ENCODE measurements at regions of chr17 and their contacts with region 1.

Region 1: DNA sequence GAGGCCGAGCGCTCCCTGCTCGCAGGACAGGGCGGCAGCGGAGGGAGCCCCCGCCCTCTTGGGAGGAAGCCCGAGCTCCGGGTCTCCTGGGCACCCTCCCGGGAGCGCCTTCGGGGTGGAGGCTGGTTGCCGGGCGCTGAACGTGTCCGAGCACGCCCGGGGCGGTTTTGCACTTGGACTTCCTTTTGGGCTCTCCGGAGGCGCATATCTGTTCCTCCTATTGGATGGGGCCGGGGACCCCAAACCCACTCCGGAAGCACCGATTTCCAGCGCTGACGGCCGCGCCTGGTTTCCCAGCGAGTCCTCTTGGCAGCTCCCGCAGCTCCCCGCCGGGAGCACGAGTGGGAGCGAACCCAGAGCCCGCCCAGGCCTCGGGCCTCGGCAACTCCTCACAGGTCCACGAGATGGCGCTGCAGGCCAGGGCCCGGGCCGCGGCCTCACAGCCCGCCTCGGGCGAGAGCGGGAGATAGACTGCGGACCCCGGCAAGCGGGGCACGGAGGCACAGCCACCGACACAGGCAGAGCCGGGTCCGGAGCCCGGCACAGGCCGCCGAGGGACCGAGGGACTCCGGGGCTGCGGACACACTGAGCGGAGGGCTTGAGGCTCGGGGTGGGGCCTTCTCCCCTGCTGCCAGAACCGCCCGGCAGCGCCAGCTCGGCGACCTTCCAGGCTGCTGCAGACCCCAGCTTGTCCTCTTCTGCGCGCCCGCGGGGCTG is 12.7 kb downstream of the TBX2 start:
- DNase-seq: peak; percentile 81
- H3K4me3 ChIP-seq: peak overlapping the region; percentile 53 to 75 (median 71)
- H3K27ac ChIP-seq: peak overlapping the region; percentile 2
- H3K4me1 ChIP-seq: peaks cover 17% of the 10 kb centered on the region
- H3K27me3 ChIP-seq: no peaks in the 10 kb centered on the region
- CTCF ChIP-seq: peak; percentile 68 to 98

Region 2: DNA sequence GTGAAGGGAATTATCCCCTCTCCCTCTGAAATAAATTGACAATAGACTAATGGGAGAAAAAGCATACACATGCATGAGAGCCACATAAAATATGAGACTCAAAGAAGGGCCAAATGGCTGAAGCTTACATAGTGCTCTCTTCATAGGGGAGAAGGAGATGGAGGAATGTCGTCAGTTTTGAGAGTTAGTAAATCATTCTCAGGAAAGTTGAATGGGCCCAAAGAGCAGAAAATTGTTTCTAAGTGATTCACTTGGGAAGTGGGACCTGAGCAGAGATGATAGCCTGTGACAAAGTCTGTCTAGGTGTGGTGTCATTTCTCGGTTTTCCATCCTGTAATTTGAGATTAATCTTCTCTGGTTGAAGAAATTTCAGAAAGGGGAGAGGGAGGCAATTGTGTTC is 699.6 kb before region 1 on chr17:
- CTCF ChIA-PET with region 1: no interaction called
- dilution Hi-C with region 1: no loop called
- in situ Hi-C with region 1: loop called (anchors 10 to 25 kb)
- intact Hi-C with region 1: no loop called
- DNase-seq: no peak
- H3K4me3 ChIP-seq: no peak overlapping the region
- H3K27ac ChIP-seq: no peak overlapping the region
- H3K4me1 ChIP-seq: no peaks in the 10 kb centered on the region
- H3K27me3 ChIP-seq: no peaks in the 10 kb centered on the region
- CTCF ChIP-seq: no peak

Region 3: DNA sequence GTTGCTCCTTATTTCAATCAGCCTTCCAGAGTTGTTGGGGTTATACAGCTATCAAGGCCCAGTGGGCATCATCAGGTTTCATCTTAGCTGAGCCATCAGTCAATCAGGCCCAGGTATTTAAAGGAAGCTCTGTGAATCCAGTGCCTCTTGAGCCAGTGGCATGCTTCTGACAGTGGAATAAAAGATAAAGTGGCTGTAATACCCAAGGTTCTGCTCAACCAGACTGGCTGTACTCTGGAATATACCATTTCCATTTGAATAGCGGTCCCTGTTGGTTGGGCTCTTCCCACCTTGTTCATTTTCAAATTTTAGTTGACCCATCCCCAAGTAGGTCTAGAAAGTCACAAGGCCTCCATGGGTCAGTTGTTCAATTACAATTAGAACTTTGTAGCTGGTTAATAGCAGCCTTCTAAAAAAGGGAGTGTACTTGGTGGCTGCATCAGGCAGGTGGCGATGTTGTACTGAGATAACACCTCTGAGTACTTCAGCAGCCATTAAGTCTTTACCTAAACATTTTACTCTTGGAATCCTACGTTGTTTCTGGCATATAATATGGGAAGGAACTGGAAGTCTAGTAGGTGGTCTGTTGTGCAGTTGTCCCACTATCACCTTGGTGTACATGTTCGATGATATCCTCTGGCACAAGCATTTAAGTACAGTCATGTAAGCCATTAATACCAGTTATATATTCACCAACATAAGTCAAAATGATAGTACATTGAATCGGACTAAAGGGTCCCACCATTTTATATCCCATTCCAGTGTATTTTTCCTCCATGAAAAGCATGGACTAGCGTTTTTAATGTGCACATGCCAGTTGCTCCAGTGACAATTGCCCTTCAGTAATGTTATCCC is 440.6 kb before region 1 on chr17:
- CTCF ChIA-PET with region 1: interaction called, 5 read pairs
- dilution Hi-C with region 1: no loop called
- in situ Hi-C with region 1: no loop called
- intact Hi-C with region 1: loop called (anchors 1 kb)
- DNase-seq: peak; percentile 28
- H3K4me3 ChIP-seq: no peak overlapping the region
- H3K27ac ChIP-seq: no peak overlapping the region
- H3K4me1 ChIP-seq: no peaks in the 10 kb centered on the region
- H3K27me3 ChIP-seq: no peaks in the 10 kb centered on the region
- CTCF ChIP-seq: peak; percentile 57 to 69

Region 4: DNA sequence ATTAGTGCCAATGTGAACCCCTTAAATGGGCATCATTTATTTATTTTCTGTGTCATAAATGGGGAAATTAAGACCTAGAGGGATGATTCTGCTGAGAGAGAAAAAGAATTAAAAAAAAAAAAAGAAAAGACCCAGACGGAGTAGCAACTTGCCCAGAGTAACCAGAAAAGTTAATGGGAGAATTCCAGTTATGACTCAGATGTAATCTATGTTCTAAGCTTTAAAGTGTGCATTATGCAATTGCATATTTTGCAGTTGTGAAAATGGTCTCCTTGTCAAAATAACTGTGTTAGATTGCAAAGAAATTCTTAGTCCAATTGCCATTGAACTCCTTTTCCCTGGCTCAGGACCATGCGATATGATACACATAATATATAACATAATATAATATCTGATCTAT is 51.2 kb before region 1 on chr17:
- CTCF ChIA-PET with region 1: interaction called, 10 read pairs
- dilution Hi-C with region 1: no loop called
- in situ Hi-C with region 1: no loop called
- intact Hi-C with region 1: no loop called
- DNase-seq: peak; percentile 57
- H3K4me3 ChIP-seq: no peak overlapping the region
- H3K27ac ChIP-seq: no peak overlapping the region
- H3K4me1 ChIP-seq: peaks cover 23% of the 10 kb centered on the region
- H3K27me3 ChIP-seq: no peaks in the 10 kb centered on the region
- CTCF ChIP-seq: no peak

Region 5: DNA sequence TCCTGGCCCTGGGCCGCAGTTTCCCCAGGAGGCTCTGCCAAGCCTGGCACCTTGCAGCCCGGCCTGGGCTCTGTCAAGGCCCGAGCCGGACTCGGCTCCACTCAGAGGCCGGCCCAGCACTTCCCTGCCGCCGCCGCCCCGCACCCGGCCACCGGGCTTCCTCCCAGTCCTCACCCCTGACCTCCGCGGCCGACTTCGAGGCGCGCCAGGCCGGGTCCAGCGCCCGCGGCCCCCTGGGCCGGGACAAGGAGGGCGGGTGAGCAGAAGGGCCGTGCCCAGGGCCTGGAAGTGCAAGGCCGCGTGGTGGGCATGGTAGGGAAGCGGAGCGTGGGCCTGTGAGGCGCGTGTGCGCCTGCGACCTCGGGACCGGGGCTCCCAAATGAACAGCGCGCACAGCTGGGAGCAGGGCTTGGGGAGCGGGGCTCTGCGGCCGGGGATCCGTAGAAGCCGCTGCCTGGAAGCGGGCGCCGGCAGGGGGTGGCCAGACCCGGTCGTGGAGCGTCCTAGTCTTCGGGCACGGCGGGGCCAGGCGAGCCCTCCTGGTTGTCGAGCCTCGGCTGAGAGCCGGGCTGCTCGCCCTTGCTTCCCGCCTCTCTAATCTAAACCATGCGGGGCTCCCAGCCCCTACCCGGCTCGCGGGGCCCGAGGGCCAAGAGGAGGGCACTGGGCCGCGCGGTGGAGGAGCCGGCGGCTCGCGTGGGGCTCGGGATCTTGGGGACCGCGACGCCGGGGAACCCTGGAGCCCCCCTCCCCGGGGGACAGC is 39.4 kb after region 1 on chr17:
- CTCF ChIA-PET with region 1: no interaction called
- dilution Hi-C with region 1: no loop called
- in situ Hi-C with region 1: no loop called
- intact Hi-C with region 1: no loop called
- DNase-seq: no peak
- H3K4me3 ChIP-seq: no peak overlapping the region
- H3K27ac ChIP-seq: no peak overlapping the region
- H3K4me1 ChIP-seq: peaks cover 4% of the 10 kb centered on the region
- H3K27me3 ChIP-seq: peaks cover 31% of the 10 kb centered on the region
- CTCF ChIP-seq: no peak

Region 6: GRCh38 chr17:61467416-61468259 is 55.3 kb after region 1 on chr17:
- CTCF ChIA-PET with region 1: no interaction called
- dilution Hi-C with region 1: no loop called
- in situ Hi-C with region 1: no loop called
- intact Hi-C with region 1: no loop called
- DNase-seq: peak; percentile 51
- H3K4me3 ChIP-seq: no peak overlapping the region
- H3K27ac ChIP-seq: no peak overlapping the region
- H3K4me1 ChIP-seq: no peaks in the 10 kb centered on the region
- H3K27me3 ChIP-seq: no peaks in the 10 kb centered on the region
- CTCF ChIP-seq: no peak

Region 7: GRCh38 chr17:61551255-61551742 is 139.0 kb after region 1 on chr17:
- CTCF ChIA-PET with region 1: no interaction called
- dilution Hi-C with region 1: no loop called
- in situ Hi-C with region 1: loop called (anchors 5 to 10 kb)
- intact Hi-C with region 1: loop called (anchors 1 kb)
- DNase-seq: no peak
- H3K4me3 ChIP-seq: no peak overlapping the region
- H3K27ac ChIP-seq: no peak overlapping the region
- H3K4me1 ChIP-seq: no peaks in the 10 kb centered on the region
- H3K27me3 ChIP-seq: peaks cover 8% of the 10 kb centered on the region
- CTCF ChIP-seq: peak; percentile 67 to 72

Region 8: GRCh38 chr17:61583242-61583641 is 170.9 kb after region 1 on chr17:
- CTCF ChIA-PET with region 1: interaction called, 4 read pairs
- dilution Hi-C with region 1: no loop called
- in situ Hi-C with region 1: no loop called
- intact Hi-C with region 1: loop called (anchors 1 kb)
- DNase-seq: peak; percentile 55
- H3K4me3 ChIP-seq: no peak overlapping the region
- H3K27ac ChIP-seq: no peak overlapping the region
- H3K4me1 ChIP-seq: no peaks in the 10 kb centered on the region
- H3K27me3 ChIP-seq: peaks cover 2% of the 10 kb centered on the region
- CTCF ChIP-seq: peak; percentile 43 to 51

Region 9: DNA sequence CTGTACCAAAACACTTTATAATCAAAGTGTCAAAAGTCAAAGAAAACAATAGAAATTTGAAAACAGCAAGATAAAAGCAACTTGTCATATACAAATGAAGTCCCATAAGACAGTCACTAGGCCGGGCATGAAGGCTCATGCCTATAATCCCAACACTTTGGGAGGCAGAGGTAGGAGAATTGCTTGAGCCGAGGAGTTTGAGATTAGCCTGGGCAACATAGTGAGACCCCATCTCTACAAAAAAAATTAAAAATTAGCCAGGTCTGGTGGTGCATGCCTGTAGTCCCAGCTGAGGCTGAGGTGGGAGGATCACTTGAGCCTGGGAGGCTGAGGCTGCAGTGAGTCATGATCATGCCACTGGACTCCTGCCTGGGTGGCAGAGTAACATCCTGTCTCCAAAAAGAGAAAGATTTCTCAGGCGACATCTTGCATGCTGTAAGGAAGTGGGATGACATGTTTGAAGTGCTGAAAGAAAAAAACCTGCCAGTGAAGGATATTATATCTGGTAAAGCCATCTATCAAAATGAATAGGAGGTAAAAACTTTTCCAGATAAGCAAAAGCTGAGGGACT is 277.4 kb after region 1 on chr17:
- CTCF ChIA-PET with region 1: no interaction called
- dilution Hi-C with region 1: no loop called
- in situ Hi-C with region 1: no loop called
- intact Hi-C with region 1: no loop called
- DNase-seq: peak; percentile 12
- H3K4me3 ChIP-seq: no peak overlapping the region
- H3K27ac ChIP-seq: peak overlapping the region; percentile 12
- H3K4me1 ChIP-seq: no peaks in the 10 kb centered on the region
- H3K27me3 ChIP-seq: no peaks in the 10 kb centered on the region
- CTCF ChIP-seq: no peak

Region 10: GRCh38 chr17:61837175-61838051 is 425.1 kb after region 1 on chr17:
- CTCF ChIA-PET with region 1: no interaction called
- dilution Hi-C with region 1: no loop called
- in situ Hi-C with region 1: loop called in 1 of 2 experiments (anchors 25 kb)
- intact Hi-C with region 1: loop called (anchors 1 kb)
- DNase-seq: peak; percentile 37
- H3K4me3 ChIP-seq: no peak overlapping the region
- H3K27ac ChIP-seq: no peak overlapping the region
- H3K4me1 ChIP-seq: peaks cover 17% of the 10 kb centered on the region
- H3K27me3 ChIP-seq: no peaks in the 10 kb centered on the region
- CTCF ChIP-seq: peak; percentile 70 to 83